ENCODE measurements at regions of chr7 and their contacts with region 1.

Region 1: GRCh38 chr7:105429746-105430612 is 41.3 kb upstream of the SRPK2 start:
- DNase-seq: peak in 4 of 5 donors; percentile 9 to 39 (median 26)
- ATAC-seq: peak in 2 of 4 donors; percentile 36 to 50
- H3K4me3 ChIP-seq: no peak overlapping the region
- H3K27ac ChIP-seq: no peak overlapping the region
- H3K4me1 ChIP-seq: peaks cover 0 to 9% (median 0%) of the 10 kb centered on the region in 12 donors
- H3K27me3 ChIP-seq: no peaks in the 10 kb centered on the region
- CTCF ChIP-seq: peak; percentile 30 to 64 (median 46)
- POLR2A ChIP-seq: no peak

Region 2: GRCh38 chr7:105387621-105388372 is 42.2 kb before region 1 on chr7:
- intact Hi-C with region 1: loop called in 1 of 10 experiments (anchors 5 kb)
- DNase-seq: peak; percentile 59 to 73 (median 61)
- ATAC-seq: peak in 3 of 4 donors; percentile 68 to 73 (median 68)
- H3K4me3 ChIP-seq: peak overlapping the region; percentile 80 to 99 (median 96)
- H3K27ac ChIP-seq: peak overlapping the region in 9 of 12 donors; percentile 35 to 88 (median 55)
- H3K4me1 ChIP-seq: peaks cover 0 to 21% (median 11%) of the 10 kb centered on the region in 12 donors
- H3K27me3 ChIP-seq: no peaks in the 10 kb centered on the region
- CTCF ChIP-seq: peak in 1 of 12 donors; percentile 23
- POLR2A ChIP-seq: no peak

Measured in heart left ventricle (tissue), 16 donors.